Naive thymus-derived CD8-positive, alpha-beta T cell (primary cell): ENCODE measurements at regions of chr7 and their contacts with region 1.

Region 1: GRCh38 chr7:150404805-150405583 is 25.9 kb downstream of the ZNF775 start:
- DNase-seq: peak; percentile 62 to 82 (median 72)
- ATAC-seq: peak; percentile 80 to 81
- H3K4me3 Mint-ChIP-seq: peak overlapping the region; percentile 90 to 98 (median 98)
- H3K27ac Mint-ChIP-seq: peak overlapping the region; percentile 89 to 99 (median 98)
- H3K4me1 Mint-ChIP-seq: peaks cover 25 to 58% (median 41%) of the 10 kb centered on the region in 4 donors
- H3K27me3 Mint-ChIP-seq: no peaks in the 10 kb centered on the region

Region 2: GRCh38 chr7:150378853-150379440 is 26.0 kb before region 1 on chr7 and contains the start of gene ZNF775:
- POLR2A ChIA-PET with region 1: interaction called, 25 read pairs
- DNase-seq: peak; percentile 88 to 94 (median 91)
- ATAC-seq: peak; percentile 93 to 96
- H3K4me3 Mint-ChIP-seq: peak within 1 kb of the TSS; percentile 82 to 95 (median 90)
- H3K27ac Mint-ChIP-seq: peak within 1 kb of the TSS; percentile 85 to 93 (median 90)
- H3K4me1 Mint-ChIP-seq: peaks cover 27 to 65% (median 60%) of the 10 kb centered on the region in 4 donors
- H3K27me3 Mint-ChIP-seq: no peaks in the 10 kb centered on the region
- polyA plus RNA-seq, gene ZNF775: 1.5 to 7.6 (median 3.1) TPM

Region 3: DNA sequence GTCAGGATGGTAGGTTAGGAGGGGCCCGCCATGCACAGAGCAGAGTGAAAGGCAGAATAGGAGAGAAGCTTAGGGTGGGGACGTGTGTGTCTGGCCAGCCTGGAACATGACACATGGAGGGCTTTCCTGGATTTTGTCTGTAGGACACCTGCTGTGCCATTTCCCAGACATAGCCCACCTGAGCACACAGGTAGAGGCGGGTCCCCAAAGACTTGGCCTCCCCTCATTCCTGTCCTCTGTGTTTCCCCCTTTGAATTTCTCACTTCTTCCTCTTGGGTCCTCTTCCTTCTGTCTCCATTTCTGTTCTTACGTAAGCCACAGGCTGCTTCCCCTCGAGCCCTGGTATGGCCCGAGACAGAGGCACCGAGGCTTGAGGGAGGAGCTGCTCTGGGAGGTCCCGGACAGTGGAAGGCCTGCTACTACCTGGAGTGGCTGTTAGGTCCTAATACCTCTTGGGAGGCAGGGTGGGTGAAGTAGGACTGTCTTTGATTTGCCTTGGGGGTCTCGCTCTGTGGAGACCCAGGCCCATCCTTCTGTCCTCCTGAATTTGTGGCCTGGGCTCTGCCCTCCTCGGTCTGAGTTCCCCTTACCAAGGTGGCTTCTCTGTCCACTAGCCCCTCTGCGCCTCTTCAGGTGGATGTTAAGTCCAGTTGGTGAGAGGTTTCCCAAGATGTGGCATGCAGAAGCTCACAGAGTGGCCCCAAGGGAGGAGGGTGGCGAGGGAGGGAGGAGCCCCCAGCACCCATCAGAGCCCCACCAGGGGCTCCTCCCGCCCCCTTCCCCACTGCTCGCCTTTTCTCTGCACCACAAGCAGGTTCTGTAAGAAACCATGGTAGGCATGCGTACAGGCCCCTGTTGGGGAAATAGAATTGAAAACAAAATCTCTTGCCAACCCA is 20.3 kb before region 1 on chr7:
- POLR2A ChIA-PET with region 1: interaction called, 10 read pairs
- DNase-seq: peak in 1 of 10 donors; percentile 30
- ATAC-seq: no peak
- H3K4me3 Mint-ChIP-seq: peak overlapping the region in 1 of 10 donors; percentile 41
- H3K27ac Mint-ChIP-seq: no peak overlapping the region
- H3K4me1 Mint-ChIP-seq: peaks cover 9 to 23% (median 20%) of the 10 kb centered on the region in 4 donors
- H3K27me3 Mint-ChIP-seq: no peaks in the 10 kb centered on the region